GM18951 (cell line): ENCODE measurements at regions of chr5 and their contacts with region 1.

Region 1: DNA sequence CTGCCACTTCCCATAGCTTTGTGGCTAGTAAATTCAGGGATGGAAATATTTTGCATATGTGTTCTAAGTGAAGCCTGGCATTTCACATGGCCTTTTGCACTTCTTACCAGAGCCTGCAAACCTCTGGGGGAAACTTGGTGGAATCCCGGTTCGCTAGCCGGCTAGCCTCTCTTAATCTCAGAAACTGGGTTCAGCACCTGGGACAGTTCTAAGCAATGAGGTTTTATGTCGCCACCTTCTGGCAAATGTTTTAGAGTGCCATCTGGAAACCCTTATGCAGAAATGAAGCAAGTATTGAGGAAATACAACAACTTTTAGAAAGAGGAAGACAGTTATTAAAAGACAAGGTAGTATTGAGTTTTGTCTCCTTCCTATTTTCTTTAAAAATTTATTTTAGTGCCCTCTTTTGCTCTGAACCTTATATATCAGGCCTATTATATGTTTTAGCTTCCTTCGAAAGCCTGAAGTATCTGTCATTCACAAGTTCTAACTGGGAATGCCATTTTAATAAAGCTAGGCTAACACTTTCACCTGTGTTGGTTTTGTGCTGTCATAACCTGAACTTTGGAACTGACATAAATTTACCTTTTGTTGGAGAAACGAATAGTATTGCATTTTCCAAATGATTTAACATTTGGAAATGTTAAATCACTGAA is 963 bp upstream of the HTR1A start:
- POLR2A ChIP-seq: no peak

Region 2: GRCh38 chr5:63398346-63398745 is 564.9 kb before region 1 on chr5:
- in situ Hi-C with region 1: loop called (anchors 25 kb)
- POLR2A ChIP-seq: no peak

Region 3: GRCh38 chr5:64069486-64069885 is 106.3 kb after region 1 on chr5:
- in situ Hi-C with region 1: no loop called
- POLR2A ChIP-seq: no peak